Heart left ventricle (tissue), 16 donors: ENCODE measurements at regions of chr3 and their contacts with region 1.

Region 1: GRCh38 chr3:29764603-29765254 is 483.9 kb downstream of the RBMS3 start:
- DNase-seq: peak in 2 of 5 donors; percentile 31 to 70
- ATAC-seq: peak; percentile 54 to 76 (median 66)
- H3K4me3 ChIP-seq: no peak overlapping the region
- H3K27ac ChIP-seq: peak overlapping the region in 1 of 12 donors; percentile 5
- H3K4me1 ChIP-seq: peaks cover 0 to 50% (median 23%) of the 10 kb centered on the region in 12 donors
- H3K27me3 ChIP-seq: no peaks in the 10 kb centered on the region
- CTCF ChIP-seq: peak; percentile 47 to 88 (median 73)
- POLR2A ChIP-seq: no peak

Region 2: GRCh38 chr3:28667646-28668621 is 1096.8 kb before region 1 on chr3:
- intact Hi-C with region 1: loop called in 5 of 10 experiments (anchors 10 kb)
- DNase-seq: peak in 4 of 5 donors; percentile 46 to 60 (median 57)
- ATAC-seq: peak; percentile 91 to 95 (median 94)
- H3K4me3 ChIP-seq: peak overlapping the region in 1 of 12 donors; percentile 11
- H3K27ac ChIP-seq: peak overlapping the region; percentile 2 to 79 (median 54)
- H3K4me1 ChIP-seq: peaks cover 0 to 16% (median 0%) of the 10 kb centered on the region in 12 donors
- H3K27me3 ChIP-seq: no peaks in the 10 kb centered on the region
- CTCF ChIP-seq: peak; percentile 74 to 87 (median 78)
- POLR2A ChIP-seq: no peak

Region 3: DNA sequence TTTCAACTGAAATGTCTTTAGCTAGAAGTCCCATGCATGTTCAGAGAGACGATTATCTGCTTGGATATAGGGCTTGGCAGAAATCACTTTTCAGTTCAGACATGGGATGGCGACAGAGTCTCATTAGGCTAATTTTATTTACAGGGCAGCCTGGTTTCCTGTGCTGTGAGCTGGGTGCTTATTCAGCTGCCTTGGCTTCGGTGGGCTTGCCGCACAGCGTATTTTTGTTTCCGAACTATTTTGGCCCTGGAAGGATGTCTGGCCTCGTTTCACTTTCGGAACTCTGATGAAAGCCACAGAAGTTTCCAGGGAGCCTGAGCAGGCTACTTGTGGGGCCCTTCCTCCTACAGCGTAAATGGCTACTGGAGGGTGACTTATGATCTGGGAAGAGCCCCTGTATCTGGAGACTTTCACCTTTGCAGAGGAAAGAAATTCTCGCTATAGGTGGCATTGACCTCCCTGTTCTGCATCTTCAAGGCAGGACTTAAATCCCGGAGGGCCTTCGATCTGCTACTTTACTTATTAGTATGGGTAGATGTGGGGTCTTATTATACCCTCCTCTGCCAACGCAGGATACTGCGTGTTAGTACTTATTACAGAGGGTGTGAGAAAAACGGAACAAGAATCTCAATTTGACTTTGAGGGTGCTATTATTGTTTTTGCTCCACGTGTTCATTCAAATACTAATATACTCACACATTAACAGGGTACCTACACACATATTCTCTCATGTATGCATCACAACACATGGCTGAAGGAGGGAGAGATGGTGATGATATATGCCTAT is 847.8 kb before region 1 on chr3:
- intact Hi-C with region 1: loop called in 8 of 10 experiments (anchors 2 to 10 kb)
- DNase-seq: peak in 4 of 5 donors; percentile 65 to 82 (median 70)
- ATAC-seq: peak; percentile 85 to 98 (median 96)
- H3K4me3 ChIP-seq: peak overlapping the region in 9 of 12 donors; percentile 23 to 49 (median 39)
- H3K27ac ChIP-seq: peak overlapping the region; percentile 32 to 73 (median 53)
- H3K4me1 ChIP-seq: peaks cover 0 to 26% (median 10%) of the 10 kb centered on the region in 12 donors
- H3K27me3 ChIP-seq: no peaks in the 10 kb centered on the region
- CTCF ChIP-seq: peak; percentile 47 to 77 (median 67)
- POLR2A ChIP-seq: no peak

Region 4: DNA sequence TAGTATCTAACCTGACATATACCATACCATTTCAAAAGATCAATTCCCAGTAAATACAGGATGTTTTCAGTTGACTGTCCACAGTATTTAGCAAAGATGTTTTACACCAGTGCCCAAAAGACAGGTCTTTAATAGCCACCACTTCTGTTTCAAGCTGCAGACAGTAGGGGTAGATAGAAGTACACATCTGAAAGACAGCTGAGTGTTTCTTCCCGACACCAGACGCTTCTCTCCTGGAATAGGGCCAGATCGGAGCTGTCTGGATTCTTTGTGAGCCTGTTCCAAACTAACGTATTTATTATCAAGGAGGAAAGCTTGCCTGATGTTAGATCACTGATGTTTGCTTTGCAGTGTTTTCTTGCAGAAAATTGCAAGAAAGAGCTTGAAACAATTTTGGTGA is 619.9 kb before region 1 on chr3:
- intact Hi-C with region 1: loop called (anchors 2 to 10 kb)
- DNase-seq: peak in 4 of 5 donors; percentile 35 to 56 (median 44)
- ATAC-seq: peak; percentile 66 to 81 (median 78)
- H3K4me3 ChIP-seq: no peak overlapping the region
- H3K27ac ChIP-seq: no peak overlapping the region
- H3K4me1 ChIP-seq: peaks cover 0 to 32% (median 6%) of the 10 kb centered on the region in 12 donors
- H3K27me3 ChIP-seq: no peaks in the 10 kb centered on the region
- CTCF ChIP-seq: peak in 10 of 12 donors; percentile 21 to 62 (median 50)
- POLR2A ChIP-seq: no peak

Region 5: DNA sequence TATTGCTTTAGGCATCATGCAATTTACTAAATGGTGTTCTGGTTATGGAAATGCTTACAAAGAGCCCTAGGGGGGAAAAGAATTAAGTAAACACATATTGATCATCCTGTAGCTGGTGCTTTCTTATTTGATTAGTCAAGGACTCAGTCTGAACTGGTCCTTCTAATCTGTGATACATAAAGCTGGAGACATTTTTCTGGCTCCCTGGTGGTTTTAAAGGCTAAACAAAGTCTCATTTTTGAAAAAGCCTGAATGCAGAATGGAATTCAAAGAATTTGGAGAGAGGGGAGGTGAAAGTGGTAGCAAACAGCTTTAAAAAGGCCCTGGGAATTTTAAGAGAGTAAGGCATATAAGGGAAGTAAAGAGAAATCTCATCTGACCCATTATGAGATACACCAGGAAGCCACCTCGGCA is 334.2 kb before region 1 on chr3:
- intact Hi-C with region 1: loop called in 1 of 10 experiments (anchors 10 kb)
- DNase-seq: no peak
- ATAC-seq: no peak
- H3K4me3 ChIP-seq: no peak overlapping the region
- H3K27ac ChIP-seq: peak overlapping the region in 3 of 12 donors; percentile 2 to 21 (median 15)
- H3K4me1 ChIP-seq: peaks cover 0 to 69% (median 32%) of the 10 kb centered on the region in 12 donors
- H3K27me3 ChIP-seq: no peaks in the 10 kb centered on the region
- CTCF ChIP-seq: no peak
- POLR2A ChIP-seq: no peak

Region 6: GRCh38 chr3:29525254-29525881 is 239.4 kb before region 1 on chr3:
- intact Hi-C with region 1: loop called in 4 of 10 experiments (anchors 10 kb)
- DNase-seq: peak in 4 of 5 donors; percentile 51 to 73 (median 63)
- ATAC-seq: peak; percentile 90 to 95 (median 92)
- H3K4me3 ChIP-seq: peak overlapping the region in 1 of 12 donors; percentile 8
- H3K27ac ChIP-seq: peak overlapping the region; percentile 7 to 83 (median 62)
- H3K4me1 ChIP-seq: peaks cover 9 to 76% (median 36%) of the 10 kb centered on the region in 12 donors
- H3K27me3 ChIP-seq: no peaks in the 10 kb centered on the region
- CTCF ChIP-seq: no peak
- POLR2A ChIP-seq: no peak

Region 7: GRCh38 chr3:29537889-29538609 is 226.7 kb before region 1 on chr3:
- intact Hi-C with region 1: loop called in 3 of 10 experiments (anchors 5 to 10 kb)
- DNase-seq: no peak
- ATAC-seq: peak in 1 of 4 donors; percentile 48
- H3K4me3 ChIP-seq: no peak overlapping the region
- H3K27ac ChIP-seq: peak overlapping the region in 6 of 12 donors; percentile 0 to 52 (median 28)
- H3K4me1 ChIP-seq: peaks cover 0 to 48% (median 22%) of the 10 kb centered on the region in 12 donors
- H3K27me3 ChIP-seq: no peaks in the 10 kb centered on the region
- CTCF ChIP-seq: no peak
- POLR2A ChIP-seq: no peak

Region 8: GRCh38 chr3:30012941-30013543 is 248.3 kb after region 1 on chr3:
- intact Hi-C with region 1: no loop called
- DNase-seq: peak; percentile 48 to 75 (median 58)
- ATAC-seq: peak in 2 of 4 donors; percentile 61 to 73
- H3K4me3 ChIP-seq: no peak overlapping the region
- H3K27ac ChIP-seq: no peak overlapping the region
- H3K4me1 ChIP-seq: no peaks in the 10 kb centered on the region
- H3K27me3 ChIP-seq: no peaks in the 10 kb centered on the region
- CTCF ChIP-seq: peak; percentile 41 to 79 (median 67)
- POLR2A ChIP-seq: no peak